WTC11 (cell line): ENCODE measurements at regions of chr7 and their contacts with region 1.

Region 1: DNA sequence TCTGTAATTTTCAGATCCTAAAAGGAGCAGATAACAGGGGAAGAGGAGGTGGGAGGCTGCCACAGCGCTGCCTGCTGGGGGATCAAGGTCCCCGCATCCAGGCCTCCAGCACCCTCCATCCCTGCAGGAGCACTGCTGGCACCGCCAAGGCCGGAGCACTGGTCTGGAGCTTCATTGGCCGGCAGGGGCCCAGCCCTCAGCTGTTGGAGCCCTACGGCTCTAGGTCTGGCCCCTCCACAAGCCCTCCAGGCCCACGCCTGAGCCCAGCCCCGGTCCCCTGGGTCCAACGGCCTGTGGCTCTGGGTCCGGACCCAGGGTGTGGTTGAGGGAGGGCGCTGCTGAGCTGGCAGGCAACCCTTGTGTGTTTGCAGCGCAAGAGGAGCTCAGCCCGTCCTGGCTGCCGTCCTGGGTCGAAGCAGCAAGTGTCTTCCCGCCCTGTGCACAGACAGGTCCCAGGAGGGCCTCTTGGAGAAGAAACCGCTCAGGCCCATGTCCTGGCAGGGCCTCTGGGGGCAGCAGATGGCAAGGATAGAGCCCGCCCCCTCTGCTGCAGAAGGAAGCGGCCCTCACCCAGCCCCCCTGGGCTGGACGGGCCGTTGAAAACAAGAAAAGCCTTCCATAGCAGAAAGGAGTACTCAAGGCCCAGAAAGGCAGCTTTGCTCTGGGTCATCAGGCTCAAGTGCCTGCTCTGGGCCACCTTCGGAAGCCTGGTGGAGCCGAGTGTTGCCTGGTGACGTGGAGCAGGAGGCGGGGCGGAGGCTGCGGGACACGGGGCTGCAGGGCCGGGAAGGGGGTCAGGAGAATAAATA is 54.3 kb upstream of the TNRC18 start:
- DNase-seq: peak; percentile 71
- ATAC-seq: peak; percentile 88
- H3K4me3 Mint-ChIP-seq: peak overlapping the region; percentile 40; the same call in 1 of the 2 replicates
- H3K27ac Mint-ChIP-seq: peak overlapping the region; percentile 98
- H3K4me1 Mint-ChIP-seq: peaks cover 20% of the 10 kb centered on the region
- H3K27me3 Mint-ChIP-seq: no peaks in the 10 kb centered on the region
- CTCF ChIP-seq: peak; percentile 33

Region 2: GRCh38 chr7:5467645-5468044 is 10.3 kb before region 1 on chr7:
- CTCF ChIA-PET with region 1: interaction called, 12 read pairs
- POLR2A ChIA-PET with region 1: no interaction called
- DNase-seq: no peak
- ATAC-seq: no peak
- H3K4me3 Mint-ChIP-seq: no peak overlapping the region
- H3K27ac Mint-ChIP-seq: no peak overlapping the region
- H3K4me1 Mint-ChIP-seq: no peaks in the 10 kb centered on the region
- H3K27me3 Mint-ChIP-seq: no peaks in the 10 kb centered on the region; the same call in 1 of the 2 replicates
- CTCF ChIP-seq: no peak

Region 3: DNA sequence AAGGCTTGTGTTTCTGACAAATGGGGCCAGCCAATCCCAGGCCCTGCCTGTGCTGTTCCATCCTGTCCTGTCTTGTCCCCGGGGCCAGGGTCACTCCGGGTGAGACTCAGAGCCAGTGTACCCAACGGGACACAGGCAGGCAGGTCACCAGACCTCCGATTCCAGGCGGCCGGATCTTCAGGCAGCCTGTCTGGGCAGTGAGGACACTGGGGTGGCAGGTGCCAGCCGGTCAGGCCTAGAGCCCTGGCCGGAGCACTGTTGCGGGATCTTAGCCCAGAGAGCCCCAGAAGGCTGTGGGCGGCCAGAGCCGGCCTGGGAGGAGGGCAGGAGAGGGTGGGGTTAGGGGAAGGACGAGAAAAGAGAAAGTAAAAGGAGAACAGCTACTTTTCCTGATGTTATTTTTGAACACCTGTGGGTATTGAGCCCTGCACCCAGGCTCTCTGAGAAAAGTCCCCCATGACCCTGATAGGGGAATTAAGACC is 80.0 kb after region 1 on chr7:
- CTCF ChIA-PET with region 1: interaction called, 12 read pairs
- POLR2A ChIA-PET with region 1: no interaction called
- DNase-seq: no peak
- ATAC-seq: no peak
- H3K4me3 Mint-ChIP-seq: peak overlapping the region; percentile 63; the same call in 1 of the 2 replicates
- H3K27ac Mint-ChIP-seq: peak overlapping the region; percentile 87; the same call in 1 of the 2 replicates
- H3K4me1 Mint-ChIP-seq: peaks cover 25% of the 10 kb centered on the region
- H3K27me3 Mint-ChIP-seq: no peaks in the 10 kb centered on the region
- CTCF ChIP-seq: no peak